ENCODE measurements at regions of chr4 and their contacts with region 1.

Region 1: DNA sequence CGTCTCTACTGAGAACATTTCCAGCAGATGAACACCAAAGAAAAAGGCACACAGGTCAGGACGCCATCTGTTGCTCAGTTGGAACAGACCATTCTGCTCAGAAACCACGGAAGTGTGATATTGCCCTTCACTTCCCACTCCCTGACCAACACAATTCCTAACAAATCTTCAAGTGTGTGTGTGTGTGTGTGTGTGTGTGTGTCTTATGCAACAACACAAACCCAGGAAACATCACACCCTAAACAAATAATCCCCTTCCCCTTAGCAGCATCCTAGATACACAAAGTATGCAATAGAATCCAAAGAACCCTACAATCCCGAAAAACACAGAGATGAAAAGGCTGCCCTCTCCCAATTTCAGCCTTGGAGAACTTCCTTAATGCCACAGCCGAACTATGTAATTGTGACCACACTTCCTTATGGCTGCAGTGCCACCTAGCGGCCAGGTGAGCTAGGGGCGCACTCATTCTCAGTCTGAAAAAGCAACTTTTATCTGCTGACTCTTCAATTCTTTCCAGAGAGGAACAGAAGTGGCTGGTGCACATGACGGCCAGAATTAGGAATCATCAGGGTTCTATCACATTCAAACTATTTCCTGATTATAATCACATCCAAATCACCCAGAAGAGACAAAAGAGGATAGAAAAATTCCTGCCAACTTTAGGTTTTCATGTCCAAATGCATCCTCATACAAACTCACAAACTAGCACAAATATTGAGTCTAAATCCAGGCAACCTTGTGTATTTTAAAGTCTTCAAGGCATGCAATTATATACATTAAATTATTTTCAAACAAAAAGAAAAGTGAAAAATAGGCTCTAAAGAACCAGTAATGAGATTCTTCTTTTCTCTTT is 164.9 kb downstream of the DHX15 start:
- DNase-seq: peak; percentile 69
- ATAC-seq: peak; percentile 60
- H3K4me3 Mint-ChIP-seq: no peak overlapping the region
- H3K27ac Mint-ChIP-seq: no peak overlapping the region
- H3K4me1 Mint-ChIP-seq: peaks cover 2% of the 10 kb centered on the region
- H3K27me3 Mint-ChIP-seq: no peaks in the 10 kb centered on the region

Region 2: DNA sequence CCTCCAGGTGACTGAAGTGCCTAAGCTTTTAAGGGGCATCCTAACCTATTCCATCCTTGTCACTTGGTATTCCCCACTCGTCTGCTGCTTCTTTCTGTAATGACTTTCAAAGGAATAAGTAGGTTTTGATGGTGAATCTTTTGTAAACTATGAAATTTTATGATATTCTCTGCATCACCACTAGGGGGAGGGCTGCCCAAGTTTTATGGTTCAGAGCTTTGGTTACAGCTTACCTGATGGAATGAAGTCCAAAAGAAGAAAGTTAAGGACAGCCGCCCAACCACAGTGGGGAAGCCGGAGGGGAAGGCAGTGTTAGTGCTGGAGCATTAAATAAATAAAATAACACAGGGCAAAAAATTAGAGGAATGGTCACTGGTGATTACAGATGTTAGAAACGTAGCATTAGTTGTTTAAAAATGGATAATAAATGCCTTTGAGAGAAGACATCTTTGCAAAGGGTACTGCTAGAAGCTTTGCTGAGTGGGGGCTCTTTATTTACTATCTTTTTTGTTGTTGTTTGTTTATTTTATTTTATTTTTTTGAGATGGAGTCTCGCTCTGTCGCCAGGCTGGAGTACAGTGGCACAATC is 1521.8 kb before region 1 on chr4:
- CTCF ChIA-PET with region 1: interaction called, 21 read pairs
- POLR2A ChIA-PET with region 1: no interaction called
- DNase-seq: peak; percentile 28
- ATAC-seq: no peak
- H3K4me3 Mint-ChIP-seq: no peak overlapping the region
- H3K27ac Mint-ChIP-seq: no peak overlapping the region
- H3K4me1 Mint-ChIP-seq: no peaks in the 10 kb centered on the region
- H3K27me3 Mint-ChIP-seq: no peaks in the 10 kb centered on the region

Region 3: DNA sequence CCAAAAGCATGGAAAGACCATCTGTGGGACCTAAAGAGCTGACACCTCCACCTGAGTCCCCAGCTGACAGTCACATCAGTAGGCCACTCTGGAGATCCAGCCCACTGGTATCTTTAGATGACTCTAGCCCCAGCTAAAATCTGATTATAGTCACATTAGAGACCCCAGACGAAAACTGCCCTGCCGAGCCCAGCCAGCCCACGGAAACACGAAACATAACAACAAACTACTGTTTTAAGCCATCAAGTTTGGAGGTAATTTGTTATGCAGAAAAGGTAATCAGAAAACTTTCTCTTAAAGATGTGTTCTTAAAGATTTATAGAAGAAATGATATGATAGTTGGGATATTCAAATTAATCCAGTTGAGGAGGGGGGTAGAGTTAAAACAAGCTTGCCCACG is 10.8 kb before region 1 on chr4:
- CTCF ChIA-PET with region 1: interaction called, 16 read pairs
- POLR2A ChIA-PET with region 1: no interaction called
- DNase-seq: no peak
- ATAC-seq: no peak
- H3K4me3 Mint-ChIP-seq: no peak overlapping the region
- H3K27ac Mint-ChIP-seq: no peak overlapping the region
- H3K4me1 Mint-ChIP-seq: no peaks in the 10 kb centered on the region
- H3K27me3 Mint-ChIP-seq: peaks cover 8% of the 10 kb centered on the region

Region 4: DNA sequence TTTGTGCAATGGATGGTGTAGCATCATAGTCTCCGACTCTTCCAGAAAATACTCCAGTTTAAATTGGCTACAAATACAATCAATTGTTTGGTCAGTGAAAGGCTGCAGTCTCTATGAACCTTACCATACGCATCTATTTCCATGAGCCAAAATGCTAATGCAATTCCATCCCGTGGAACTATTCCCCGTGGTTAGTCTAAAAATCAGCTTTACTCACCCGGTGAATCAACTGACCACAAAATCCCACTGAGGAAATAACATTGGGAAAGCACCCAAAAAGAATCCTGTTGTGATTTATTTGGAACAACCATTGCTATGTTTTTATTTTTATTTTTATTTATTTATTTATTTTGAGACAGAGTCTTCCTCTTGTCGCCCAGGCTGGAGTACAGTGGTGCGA is 77.8 kb after region 1 on chr4:
- CTCF ChIA-PET with region 1: no interaction called
- POLR2A ChIA-PET with region 1: no interaction called
- DNase-seq: no peak
- ATAC-seq: no peak
- H3K4me3 Mint-ChIP-seq: no peak overlapping the region
- H3K27ac Mint-ChIP-seq: no peak overlapping the region
- H3K4me1 Mint-ChIP-seq: no peaks in the 10 kb centered on the region
- H3K27me3 Mint-ChIP-seq: no peaks in the 10 kb centered on the region